ENCODE measurements at regions of chr12 and their contacts with region 1.

Region 1: DNA sequence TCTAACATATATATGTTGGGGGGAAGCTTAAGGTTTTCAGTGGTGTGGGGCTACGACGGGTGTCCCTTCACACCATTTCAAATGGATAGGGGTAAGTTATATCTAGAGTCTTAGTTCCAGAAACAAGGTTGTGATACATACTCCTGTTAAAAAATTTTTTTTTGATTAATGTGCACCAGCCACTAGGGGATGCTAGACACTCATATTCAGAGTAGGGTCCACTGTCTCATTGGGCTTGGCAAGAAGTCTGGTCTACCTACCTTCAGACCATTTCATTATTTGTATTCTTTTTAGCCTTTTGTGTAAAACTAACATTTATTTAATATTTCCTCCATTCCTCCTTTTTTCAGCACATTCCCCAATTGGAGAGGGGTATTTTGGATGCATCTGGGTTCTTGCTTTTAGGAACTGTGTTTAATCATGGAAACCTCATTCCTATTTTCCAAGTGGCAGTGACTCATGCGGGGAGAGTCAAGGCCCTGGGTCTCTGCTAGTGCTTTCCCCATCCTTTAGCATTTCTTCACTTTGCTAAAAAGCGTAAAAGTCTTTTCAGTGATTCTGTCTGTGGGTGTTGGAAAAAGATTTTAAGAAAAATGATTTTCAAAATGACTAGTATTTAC is 33.4 kb downstream of the ANO4 start:
- DNase-seq: no peak
- H3K4me3 ChIP-seq: no peak overlapping the region
- H3K27ac ChIP-seq: no peak overlapping the region
- H3K27me3 ChIP-seq: no peaks in the 10 kb centered on the region
- CTCF ChIP-seq: peak; percentile 90

Region 2: DNA sequence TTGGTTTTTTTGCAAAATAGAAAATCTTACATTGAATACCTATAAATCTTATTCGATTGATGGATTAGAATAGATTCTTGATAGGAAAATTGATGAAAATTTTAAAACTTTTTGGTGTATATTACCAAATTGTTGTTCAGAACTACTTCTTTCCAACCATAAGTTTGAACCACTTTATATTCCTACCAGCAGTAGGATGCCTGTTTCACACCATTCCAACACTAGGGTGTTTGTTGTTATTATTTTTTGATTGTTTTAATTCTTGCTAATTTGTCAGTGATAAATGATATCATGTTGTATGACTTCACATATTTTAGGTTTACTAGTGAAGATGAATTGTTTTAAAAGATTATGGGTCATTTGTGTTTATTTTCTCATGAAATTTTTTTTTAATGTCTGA is 495.2 kb after region 1 on chr12:
- CTCF ChIA-PET with region 1: interaction called, 46 read pairs
- POLR2A ChIA-PET with region 1: no interaction called
- DNase-seq: no peak
- H3K4me3 ChIP-seq: no peak overlapping the region
- H3K27ac ChIP-seq: no peak overlapping the region
- H3K27me3 ChIP-seq: no peaks in the 10 kb centered on the region
- CTCF ChIP-seq: no peak